ENCODE measurements at regions of chr6 and their contacts with region 1.

Region 1: GRCh38 chr6:18978359-18979128 is 591.4 kb downstream of the RNF144B start:
- DNase-seq: no peak
- ATAC-seq: peak; percentile 93

Region 2: GRCh38 chr6:18893540-18894269 is 84.8 kb before region 1 on chr6:
- intact Hi-C with region 1: loop called (anchors 5 kb)
- DNase-seq: no peak
- ATAC-seq: peak; percentile 20